A673 (cell line): ENCODE measurements at regions of chr1 and their contacts with region 1.

Region 1: GRCh38 chr1:26102526-26102925 is 9.1 kb upstream of the PDIK1L start:
- DNase-seq: no peak
- H3K4me3 ChIP-seq: no peak overlapping the region
- H3K27ac ChIP-seq: no peak overlapping the region
- H3K4me1 ChIP-seq: no peaks in the 10 kb centered on the region
- H3K27me3 ChIP-seq: no peaks in the 10 kb centered on the region
- CTCF ChIP-seq: no peak

Region 2: GRCh38 chr1:26164036-26164860 is 61.7 kb after region 1 on chr1:
- CTCF ChIA-PET with region 1: no interaction called
- POLR2A ChIA-PET with region 1: no interaction called
- intact Hi-C with region 1: loop called (anchors 1 kb)
- DNase-seq: peak; percentile 62
- H3K4me3 ChIP-seq: peak overlapping the region; percentile 51
- H3K27ac ChIP-seq: peak overlapping the region; percentile 54
- H3K4me1 ChIP-seq: peaks cover 27% of the 10 kb centered on the region
- H3K27me3 ChIP-seq: no peaks in the 10 kb centered on the region
- CTCF ChIP-seq: peak; percentile 60; the same call in 1 of the 2 replicates

Region 3: DNA sequence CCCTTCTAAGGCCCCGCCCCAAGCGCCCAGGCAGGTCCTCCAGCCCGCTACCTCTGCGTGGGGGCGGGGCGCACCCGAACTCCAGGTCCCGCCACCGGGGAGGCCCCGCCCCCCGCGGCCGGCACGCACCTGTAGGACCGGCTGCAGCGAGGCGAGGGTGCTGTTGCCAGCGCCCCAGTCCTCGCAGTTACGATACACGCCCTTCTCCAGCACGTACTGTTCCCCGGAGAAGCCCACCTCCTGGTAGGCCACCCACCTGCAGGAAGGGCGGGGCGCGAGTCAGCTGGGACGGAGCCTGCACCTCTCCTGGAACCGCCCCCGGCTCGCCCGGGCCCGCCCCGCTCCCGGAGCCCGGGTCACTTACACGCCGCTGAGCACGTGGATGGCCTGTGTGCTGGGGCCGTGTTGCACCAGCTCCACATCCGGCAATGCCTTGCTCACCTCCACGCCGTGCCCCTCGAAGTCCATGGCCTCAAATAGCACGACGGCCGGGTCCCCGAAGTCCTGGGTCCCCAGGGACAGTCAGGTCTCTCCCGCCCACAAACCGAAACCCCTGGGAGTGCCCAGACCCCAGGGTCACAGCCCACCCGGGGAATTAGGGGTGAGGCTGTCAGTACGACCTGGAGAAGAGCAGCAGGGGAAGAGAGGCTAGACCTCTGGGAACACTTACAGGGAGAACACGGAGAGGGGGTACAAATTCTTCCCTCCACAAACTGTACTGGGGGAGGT is 234.1 kb after region 1 on chr1:
- CTCF ChIA-PET with region 1: no interaction called
- POLR2A ChIA-PET with region 1: no interaction called
- intact Hi-C with region 1: no loop called
- DNase-seq: peak; percentile 65
- H3K4me3 ChIP-seq: peak overlapping the region; percentile 43
- H3K27ac ChIP-seq: no peak overlapping the region
- H3K4me1 ChIP-seq: no peaks in the 10 kb centered on the region
- H3K27me3 ChIP-seq: no peaks in the 10 kb centered on the region
- CTCF ChIP-seq: no peak